ENCODE measurements at regions of chr13 and their contacts with region 1.

Region 1: GRCh38 chr13:107205303-107206104 is 637.6 kb upstream of the ARGLU1 start:
- DNase-seq: peak; percentile 48 to 74 (median 63)
- ATAC-seq: peak; percentile 46 to 74 (median 66)
- H3K4me3 ChIP-seq: peak overlapping the region in 1 of 12 donors; percentile 13
- H3K27ac ChIP-seq: peak overlapping the region in 6 of 12 donors; percentile 1 to 89 (median 34)
- H3K4me1 ChIP-seq: peaks cover 8 to 52% (median 22%) of the 10 kb centered on the region in 12 donors
- H3K27me3 ChIP-seq: no peaks in the 10 kb centered on the region
- CTCF ChIP-seq: peak; percentile 96 to 100 (median 98)
- POLR2A ChIP-seq: no peak

Region 2: DNA sequence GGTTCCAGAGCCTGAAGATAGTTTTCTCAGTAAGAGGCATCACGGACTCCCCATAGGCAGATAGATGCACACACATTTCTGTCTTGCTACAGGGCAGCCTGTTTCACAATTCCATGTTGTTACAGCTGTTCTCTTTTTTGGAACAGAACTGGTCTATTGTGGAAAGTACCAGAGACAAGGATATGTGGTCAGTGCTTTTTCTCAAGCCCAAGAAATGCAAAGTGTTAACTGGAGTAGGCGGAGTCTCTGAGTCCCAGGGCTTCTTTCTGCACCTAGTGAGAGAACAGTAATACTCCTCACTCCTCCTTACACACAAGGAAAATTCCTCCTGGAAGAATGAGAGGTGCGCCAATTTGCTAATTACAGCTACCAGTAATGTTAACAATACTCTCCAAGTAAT is 496.0 kb before region 1 on chr13:
- intact Hi-C with region 1: loop called in 1 of 10 experiments (anchors 10 kb)
- DNase-seq: peak in 2 of 5 donors; percentile 26 to 41
- ATAC-seq: peak; percentile 32 to 93 (median 86)
- H3K4me3 ChIP-seq: peak overlapping the region in 10 of 12 donors; percentile 1 to 51 (median 36)
- H3K27ac ChIP-seq: peak overlapping the region; percentile 65 to 88 (median 82)
- H3K4me1 ChIP-seq: peaks cover 0 to 51% (median 8%) of the 10 kb centered on the region in 12 donors
- H3K27me3 ChIP-seq: no peaks in the 10 kb centered on the region
- CTCF ChIP-seq: no peak
- POLR2A ChIP-seq: no peak

Region 3: DNA sequence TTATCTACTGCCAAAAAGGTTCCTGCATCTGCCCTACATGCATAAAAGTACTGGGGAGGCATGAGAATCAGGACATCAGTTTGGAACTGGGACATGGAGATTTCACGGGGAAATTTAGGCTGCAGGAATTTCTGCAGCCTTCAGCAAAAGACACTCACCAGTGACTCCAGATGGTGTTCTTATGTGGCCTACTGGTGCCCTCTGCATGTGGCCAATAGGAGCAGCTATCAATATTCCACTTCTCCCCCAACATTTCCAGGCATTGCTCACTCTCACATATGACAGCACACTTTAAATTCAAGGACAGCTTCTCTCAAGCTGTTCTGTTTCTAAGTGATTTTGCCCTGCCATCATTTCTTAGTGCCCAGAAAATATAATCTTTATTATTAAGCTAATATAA is 67.0 kb before region 1 on chr13:
- intact Hi-C with region 1: loop called in 2 of 10 experiments (anchors 2 to 5 kb)
- DNase-seq: no peak
- ATAC-seq: no peak
- H3K4me3 ChIP-seq: no peak overlapping the region
- H3K27ac ChIP-seq: peak overlapping the region in 6 of 12 donors; percentile 9 to 44 (median 30)
- H3K4me1 ChIP-seq: peaks cover 0 to 35% (median 13%) of the 10 kb centered on the region in 12 donors
- H3K27me3 ChIP-seq: no peaks in the 10 kb centered on the region
- CTCF ChIP-seq: no peak
- POLR2A ChIP-seq: no peak

Region 4: GRCh38 chr13:107144432-107144831 is 61.1 kb before region 1 on chr13:
- intact Hi-C with region 1: loop called in 2 of 10 experiments (anchors 2 to 5 kb)
- DNase-seq: no peak
- ATAC-seq: no peak
- H3K4me3 ChIP-seq: no peak overlapping the region
- H3K27ac ChIP-seq: no peak overlapping the region
- H3K4me1 ChIP-seq: peaks cover 0 to 19% (median 3%) of the 10 kb centered on the region in 12 donors
- H3K27me3 ChIP-seq: no peaks in the 10 kb centered on the region
- CTCF ChIP-seq: peak in 5 of 12 donors; percentile 12 to 43 (median 30)
- POLR2A ChIP-seq: no peak

Region 5: DNA sequence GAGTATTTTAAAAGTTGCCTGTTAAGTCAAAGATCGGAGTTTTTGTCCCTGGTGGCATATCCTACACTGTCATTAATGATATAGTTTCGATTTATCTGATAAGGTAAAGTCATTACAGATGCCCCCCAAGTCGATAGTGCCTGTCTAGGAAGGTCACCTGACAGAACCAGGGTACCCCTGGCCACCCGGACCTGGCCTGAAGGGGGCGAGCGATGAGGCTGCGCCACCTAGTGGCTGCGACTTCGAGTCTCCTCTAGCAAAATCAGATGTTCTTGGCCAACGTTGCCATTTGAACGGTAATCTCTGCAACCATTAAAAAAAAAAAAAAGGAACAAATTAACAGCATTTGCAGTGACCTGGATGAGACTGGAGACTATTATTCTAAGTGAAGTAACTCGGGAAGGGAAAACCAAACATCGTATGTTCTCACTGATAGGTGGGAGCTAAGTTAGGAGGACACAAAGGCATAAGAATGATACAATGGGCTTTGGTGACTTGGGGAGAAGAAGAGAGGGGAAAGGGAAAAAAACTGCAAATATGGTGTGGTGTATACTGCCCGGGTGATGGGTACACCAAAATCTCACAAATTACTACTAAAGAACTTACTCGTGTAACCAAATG is 444.7 kb after region 1 on chr13:
- intact Hi-C with region 1: loop called in 8 of 10 experiments (anchors 2 to 10 kb)
- DNase-seq: peak; percentile 12 to 63 (median 27)
- ATAC-seq: no peak
- H3K4me3 ChIP-seq: no peak overlapping the region
- H3K27ac ChIP-seq: no peak overlapping the region
- H3K4me1 ChIP-seq: no peaks in the 10 kb centered on the region
- H3K27me3 ChIP-seq: no peaks in the 10 kb centered on the region
- CTCF ChIP-seq: peak; percentile 48 to 74 (median 62)
- POLR2A ChIP-seq: no peak

Region 6: GRCh38 chr13:108155185-108156106 is 949.9 kb after region 1 on chr13:
- intact Hi-C with region 1: loop called in 9 of 10 experiments (anchors 1 to 5 kb)
- DNase-seq: peak in 4 of 5 donors; percentile 22 to 41 (median 33)
- ATAC-seq: peak in 1 of 4 donors; percentile 41
- H3K4me3 ChIP-seq: no peak overlapping the region
- H3K27ac ChIP-seq: no peak overlapping the region
- H3K4me1 ChIP-seq: no peaks in the 10 kb centered on the region
- H3K27me3 ChIP-seq: no peaks in the 10 kb centered on the region
- CTCF ChIP-seq: peak; percentile 68 to 92 (median 84)
- POLR2A ChIP-seq: no peak

Measured in heart left ventricle (tissue), 16 donors.